ENCODE measurements at regions of chr11 and their contacts with region 1.

Region 1: GRCh38 chr11:72413914-72414628 is 20.3 kb downstream of the CLPB start:
- DNase-seq: peak; percentile 85
- H3K4me3 Mint-ChIP-seq: no peak overlapping the region
- H3K27ac Mint-ChIP-seq: no peak overlapping the region
- H3K4me1 Mint-ChIP-seq: peaks cover 5% of the 10 kb centered on the region
- H3K27me3 Mint-ChIP-seq: no peaks in the 10 kb centered on the region
- CTCF ChIP-seq: peak; percentile 82

Region 2: GRCh38 chr11:72238040-72238450 is 176.0 kb before region 1 on chr11:
- CTCF ChIA-PET with region 1: interaction called, 12 read pairs
- POLR2A ChIA-PET with region 1: interaction called, 3 read pairs
- intact Hi-C with region 1: no loop called
- DNase-seq: peak; percentile 60
- H3K4me3 Mint-ChIP-seq: no peak overlapping the region
- H3K27ac Mint-ChIP-seq: no peak overlapping the region
- H3K4me1 Mint-ChIP-seq: peaks cover 9% of the 10 kb centered on the region
- H3K27me3 Mint-ChIP-seq: no peaks in the 10 kb centered on the region
- CTCF ChIP-seq: peak; percentile 60

Region 3: DNA sequence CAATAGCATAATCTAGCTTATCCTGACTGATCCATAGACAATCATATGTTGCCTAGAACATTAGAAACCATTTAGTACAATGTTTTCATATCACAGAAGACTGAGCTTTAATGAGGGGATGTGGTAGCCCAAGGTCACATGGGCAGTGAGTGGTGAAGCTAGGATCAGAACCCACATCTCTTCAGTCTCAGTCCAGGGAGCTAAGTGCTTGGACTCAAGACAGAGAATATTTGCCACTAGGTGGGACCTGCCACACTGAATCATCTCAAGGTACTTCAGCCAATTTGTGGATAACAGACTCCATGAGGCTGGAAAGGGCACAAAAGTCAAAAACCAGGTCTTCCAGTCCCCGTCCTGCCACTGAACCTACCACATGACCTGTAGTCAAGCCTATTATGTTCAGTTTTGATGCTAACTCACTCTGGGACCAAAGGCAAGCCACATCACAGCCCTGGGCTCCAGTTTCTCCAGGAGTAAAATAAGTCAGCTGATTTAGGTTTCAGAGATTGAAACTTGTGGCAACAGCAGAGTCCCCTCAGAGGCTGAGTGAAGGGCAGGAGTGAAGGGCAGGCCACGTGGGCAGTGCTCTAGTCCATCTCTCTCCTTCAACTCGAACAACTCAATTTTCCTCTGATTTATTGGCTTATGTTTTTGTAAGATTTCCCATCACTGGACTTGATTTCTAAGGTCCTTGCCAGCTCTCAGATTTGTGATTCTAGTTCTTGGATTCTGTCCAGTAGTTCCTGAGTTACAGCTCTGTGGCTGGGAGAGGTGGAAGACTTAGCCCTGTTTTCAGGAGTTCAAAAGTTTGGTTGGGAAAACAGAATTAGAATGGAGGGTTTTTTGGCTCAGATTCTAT is 85.5 kb before region 1 on chr11:
- CTCF ChIA-PET with region 1: interaction called, 10 read pairs
- POLR2A ChIA-PET with region 1: no interaction called
- intact Hi-C with region 1: no loop called
- DNase-seq: no peak
- H3K4me3 Mint-ChIP-seq: no peak overlapping the region
- H3K27ac Mint-ChIP-seq: no peak overlapping the region
- H3K4me1 Mint-ChIP-seq: peaks cover 7% of the 10 kb centered on the region
- H3K27me3 Mint-ChIP-seq: no peaks in the 10 kb centered on the region
- CTCF ChIP-seq: peak; percentile 8

Region 4: DNA sequence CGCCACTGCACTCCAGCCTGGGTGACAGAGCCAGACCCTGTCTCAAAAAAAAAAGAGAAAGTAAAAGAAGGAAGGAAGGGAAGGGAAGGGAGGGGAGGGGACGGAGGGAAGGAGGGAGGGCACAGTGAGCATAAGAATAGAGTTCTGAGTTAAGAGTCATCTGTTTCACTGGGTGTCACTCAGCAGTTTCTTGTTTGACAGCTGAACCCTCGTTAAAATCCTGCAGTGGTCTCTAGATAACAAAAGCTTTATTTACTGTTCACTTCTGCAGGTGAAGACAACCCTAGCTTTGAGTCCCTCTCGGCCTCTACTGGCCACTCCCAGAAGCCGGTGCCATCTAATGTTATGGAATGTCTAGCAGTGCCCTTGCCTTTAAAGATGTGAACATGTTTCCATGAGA is 51.0 kb before region 1 on chr11:
- CTCF ChIA-PET with region 1: interaction called, 11 read pairs
- POLR2A ChIA-PET with region 1: no interaction called
- intact Hi-C with region 1: no loop called
- DNase-seq: no peak
- H3K4me3 Mint-ChIP-seq: no peak overlapping the region
- H3K27ac Mint-ChIP-seq: no peak overlapping the region
- H3K4me1 Mint-ChIP-seq: no peaks in the 10 kb centered on the region
- H3K27me3 Mint-ChIP-seq: no peaks in the 10 kb centered on the region
- CTCF ChIP-seq: no peak

Region 5: GRCh38 chr11:72430741-72431570 is 16.9 kb after region 1 on chr11:
- CTCF ChIA-PET with region 1: interaction called, 50 read pairs
- POLR2A ChIA-PET with region 1: interaction called, 17 read pairs
- intact Hi-C with region 1: no loop called
- DNase-seq: peak; percentile 51
- H3K4me3 Mint-ChIP-seq: no peak overlapping the region
- H3K27ac Mint-ChIP-seq: no peak overlapping the region
- H3K4me1 Mint-ChIP-seq: peaks cover 28% of the 10 kb centered on the region
- H3K27me3 Mint-ChIP-seq: no peaks in the 10 kb centered on the region
- CTCF ChIP-seq: peak; percentile 81